K562 (cell line): ENCODE measurements at regions of chr2 and their contacts with region 1.

Region 1: GRCh38 chr2:39513641-39514094 is 76.6 kb upstream of the MAP4K3 start:
- DNase-seq: peak; percentile 69 to 87 (median 73)
- ATAC-seq: peak; percentile 75
- H3K4me3 ChIP-seq: no peak overlapping the region
- H3K27ac ChIP-seq: peak overlapping the region; percentile 77
- H3K4me1 ChIP-seq: peaks cover 27 to 53% of the 10 kb centered on the region in 2 experiments
- H3K27me3 ChIP-seq: no peaks in the 10 kb centered on the region
- CTCF ChIP-seq: peak; percentile 63 to 81 (median 72)
- EP300 ChIP-seq: no peak
- POLR2A ChIP-seq: no peak
- RAD21 ChIP-seq: peak; percentile 73 to 86

Region 2: GRCh38 chr2:39234754-39235153 is 278.9 kb before region 1 on chr2:
- CTCF ChIA-PET with region 1: no interaction called
- POLR2A ChIA-PET with region 1: no interaction called
- in situ Hi-C with region 1: no loop called
- intact Hi-C with region 1: loop called (anchors 10 kb)
- DNase-seq: no peak
- ATAC-seq: no peak
- H3K4me3 ChIP-seq: no peak overlapping the region
- H3K27ac ChIP-seq: no peak overlapping the region
- H3K4me1 ChIP-seq: no peaks in the 10 kb centered on the region; a peak in 1 of 5 replicates
- H3K27me3 ChIP-seq: no peaks in the 10 kb centered on the region
- CTCF ChIP-seq: no peak
- EP300 ChIP-seq: no peak
- POLR2A ChIP-seq: no peak
- RAD21 ChIP-seq: no peak

Region 3: DNA sequence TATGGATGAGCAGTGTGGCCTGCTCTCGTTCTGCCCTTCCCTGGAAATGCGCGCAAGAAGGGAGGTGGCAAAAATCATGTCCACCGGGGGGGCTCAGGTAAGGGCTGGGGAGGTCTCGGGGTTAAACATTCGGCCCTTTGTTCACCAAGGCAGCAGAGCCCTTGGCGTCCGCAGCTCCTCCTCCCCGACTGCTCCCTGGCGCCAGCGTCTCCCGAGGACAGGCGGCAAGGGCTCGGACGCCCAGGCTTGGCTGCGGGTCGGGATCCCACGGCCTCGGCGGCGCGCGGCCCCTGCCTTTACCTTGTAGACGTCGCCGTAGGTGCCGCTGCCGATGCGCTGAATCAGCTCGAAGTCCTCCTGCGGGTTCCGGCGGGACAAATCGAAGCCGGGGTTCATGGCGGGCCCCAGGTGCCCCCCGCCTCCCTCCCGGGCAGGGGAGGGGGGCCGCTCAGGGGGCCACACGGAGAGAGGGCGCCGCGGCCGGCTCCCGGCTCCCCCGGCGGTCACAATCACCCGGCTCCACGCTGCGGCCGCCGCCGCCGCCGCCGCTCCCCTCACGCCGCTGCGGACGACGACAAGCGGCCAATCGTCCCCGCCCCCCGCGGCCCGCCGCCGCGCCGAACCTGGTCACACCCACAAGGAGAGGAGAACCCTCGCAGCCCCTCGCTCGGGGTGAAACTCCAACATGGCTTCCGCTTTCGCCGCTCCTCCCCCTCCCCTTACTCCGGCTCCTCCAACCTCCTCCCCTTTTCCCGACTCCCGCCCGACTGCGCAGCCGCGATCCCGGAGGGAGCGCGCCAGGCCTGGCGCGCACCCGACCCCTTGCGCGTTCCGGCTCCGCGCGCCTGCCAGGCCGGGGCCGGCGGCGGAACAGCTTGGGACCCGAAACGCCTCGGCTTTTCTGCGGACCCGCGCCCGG is 76.8 kb before region 1 on chr2 and contains the start of gene MAP4K3:
- CTCF ChIA-PET with region 1: no interaction called
- POLR2A ChIA-PET with region 1: interaction called, 3 read pairs
- in situ Hi-C with region 1: no loop called
- intact Hi-C with region 1: loop called (anchors 1 kb)
- DNase-seq: peak; percentile 95 to 97 (median 96)
- ATAC-seq: peak; percentile 76
- H3K4me3 ChIP-seq: peak within 1 kb of the TSS; percentile 81
- H3K27ac ChIP-seq: peak within 1 kb of the TSS; percentile 89
- H3K4me1 ChIP-seq: peaks cover 33 to 39% of the 10 kb centered on the region in 2 experiments
- H3K27me3 ChIP-seq: no peaks in the 10 kb centered on the region
- CTCF ChIP-seq: no peak
- EP300 ChIP-seq: no peak
- POLR2A ChIP-seq: peak; percentile 76; the same call in 1 of the 2 replicates
- RAD21 ChIP-seq: 0 out of 4 replicates have a peak, but pooled peaks of 1 of the 2 experiments have one; percentile 7
- polyA plus RNA-seq, gene MAP4K3: 3.1 to 4.4 TPM

Region 4: DNA sequence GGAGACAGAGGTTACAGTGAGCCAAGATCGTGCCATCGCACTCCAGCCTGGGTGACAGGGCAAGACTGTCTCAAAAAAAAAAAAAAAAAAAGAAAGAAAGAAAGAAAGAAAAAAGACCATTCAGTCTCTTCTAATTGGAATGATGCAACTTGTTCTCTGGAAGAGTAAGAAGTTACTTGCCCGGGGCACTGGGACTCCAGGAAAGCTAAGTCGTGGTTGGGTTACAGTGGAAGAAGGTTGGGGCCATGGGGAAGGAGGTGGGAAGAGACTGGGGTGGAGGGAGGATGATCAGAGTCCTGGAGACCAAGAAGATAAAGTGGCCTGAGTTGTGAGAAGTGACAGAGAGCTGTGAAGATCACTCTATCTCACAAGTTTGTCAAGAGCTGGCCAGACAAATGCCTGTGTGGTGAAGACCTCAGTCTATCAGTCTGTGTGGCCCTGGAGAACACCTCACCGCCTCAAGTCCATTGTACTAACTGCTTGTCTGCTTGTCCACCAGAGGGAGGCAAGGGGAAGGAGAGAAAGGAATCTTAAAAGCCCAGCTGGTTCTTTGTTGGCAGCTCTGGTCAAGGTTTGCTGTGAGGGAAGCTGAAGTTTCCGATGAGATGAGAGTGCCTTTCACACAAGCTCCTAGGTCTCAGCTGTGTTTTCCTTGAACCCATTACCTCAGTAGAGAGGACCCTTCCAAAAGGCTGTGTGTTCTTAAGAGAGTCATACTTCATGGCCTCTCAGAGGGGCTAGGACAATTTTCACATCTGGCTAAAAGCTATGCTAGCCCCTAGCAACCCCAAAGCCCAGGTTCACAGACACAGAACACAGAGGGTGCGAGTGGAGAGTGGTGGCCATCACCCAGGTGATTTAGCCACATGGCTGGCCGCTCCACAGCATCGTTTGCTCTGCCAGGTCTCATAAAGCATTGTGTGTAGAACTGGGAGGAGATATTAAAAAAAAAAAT is 80.0 kb after region 1 on chr2:
- CTCF ChIA-PET with region 1: no interaction called
- POLR2A ChIA-PET with region 1: no interaction called
- in situ Hi-C with region 1: no loop called
- intact Hi-C with region 1: loop called (anchors 5 kb)
- DNase-seq: peak in 2 of 4 experiments; percentile 37 to 61
- ATAC-seq: peak; percentile 97
- H3K4me3 ChIP-seq: no peak overlapping the region
- H3K27ac ChIP-seq: no peak overlapping the region
- H3K4me1 ChIP-seq: no peaks in the 10 kb centered on the region
- H3K27me3 ChIP-seq: peaks cover 4 to 6% of the 10 kb centered on the region in 2 experiments; a peak in 4 of 5 replicates
- CTCF ChIP-seq: peak; percentile 57 to 67 (median 59)
- EP300 ChIP-seq: no peak
- POLR2A ChIP-seq: no peak
- RAD21 ChIP-seq: peak; percentile 46 to 70

Region 5: GRCh38 chr2:39728941-39729351 is 215.3 kb after region 1 on chr2:
- CTCF ChIA-PET with region 1: no interaction called
- POLR2A ChIA-PET with region 1: no interaction called
- in situ Hi-C with region 1: no loop called
- intact Hi-C with region 1: loop called (anchors 1 kb)
- DNase-seq: peak; percentile 42 to 58 (median 48)
- ATAC-seq: peak; percentile 86
- H3K4me3 ChIP-seq: no peak overlapping the region
- H3K27ac ChIP-seq: no peak overlapping the region
- H3K4me1 ChIP-seq: no peaks in the 10 kb centered on the region
- H3K27me3 ChIP-seq: peaks cover 0 to 10% of the 10 kb centered on the region in 2 experiments; a peak in 1 of 5 replicates
- CTCF ChIP-seq: peak; percentile 72 to 81 (median 80)
- EP300 ChIP-seq: no peak
- POLR2A ChIP-seq: no peak
- RAD21 ChIP-seq: peak; percentile 30 to 63; a peak in 3 of 4 replicates